ENCODE measurements at regions of chr18 and their contacts with region 1.

Region 1: DNA sequence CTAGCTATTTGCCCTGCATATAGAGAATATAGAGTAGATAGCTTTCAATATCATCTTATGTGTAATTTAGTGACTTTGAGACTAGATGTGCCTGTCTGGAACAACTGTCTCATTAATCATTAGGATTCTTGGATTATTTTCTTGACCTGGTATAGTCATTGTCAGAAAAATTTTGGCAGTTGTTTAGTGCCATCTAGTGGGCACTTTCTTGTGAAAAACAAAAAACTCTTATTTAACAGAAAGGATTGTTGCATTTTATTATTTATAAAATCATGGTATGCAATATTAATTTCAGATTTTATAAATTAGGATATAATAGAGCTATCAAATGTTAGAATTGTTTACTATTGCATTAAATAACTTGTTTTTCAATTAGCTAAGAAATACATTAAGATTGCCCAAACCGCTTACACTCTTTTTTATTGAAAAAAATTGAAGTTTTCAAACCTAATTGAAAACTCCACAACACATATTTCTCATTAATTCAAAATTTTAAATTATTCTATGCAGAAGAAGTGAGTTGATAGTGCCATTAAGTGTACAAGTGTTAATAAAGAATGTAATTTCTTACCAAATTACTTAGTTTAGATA is 80.3 kb downstream of the DYNAP start:
- DNase-seq: no peak
- ATAC-seq: no peak

Region 2: DNA sequence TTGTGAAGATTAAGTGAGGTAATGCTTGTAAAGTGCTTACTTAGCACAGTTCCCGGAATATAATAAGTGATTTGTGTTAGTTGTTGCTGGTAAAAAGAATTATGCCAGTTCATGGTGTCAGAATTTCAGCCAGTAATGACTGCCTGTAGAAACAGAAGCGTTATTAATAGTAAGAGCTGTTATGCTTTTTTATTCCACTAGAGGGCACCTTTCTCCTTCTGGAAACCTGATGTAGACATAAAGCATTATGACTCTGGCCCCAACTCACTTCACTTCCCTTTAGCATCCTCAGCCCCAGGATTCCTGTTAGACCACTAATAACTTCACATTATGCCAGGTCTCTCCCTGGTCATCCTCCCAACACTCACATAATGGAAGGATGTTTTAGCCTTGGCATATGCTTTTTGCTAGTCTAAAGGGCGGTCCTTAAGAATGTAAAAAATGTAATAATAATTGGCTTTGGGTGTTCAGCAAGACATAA is 278.8 kb before region 1 on chr18:
- intact Hi-C with region 1: loop called in 1 of 2 experiments (anchors 5 kb)
- DNase-seq: no peak
- ATAC-seq: peak in 1 of 2 donors; percentile 47

Region 3: DNA sequence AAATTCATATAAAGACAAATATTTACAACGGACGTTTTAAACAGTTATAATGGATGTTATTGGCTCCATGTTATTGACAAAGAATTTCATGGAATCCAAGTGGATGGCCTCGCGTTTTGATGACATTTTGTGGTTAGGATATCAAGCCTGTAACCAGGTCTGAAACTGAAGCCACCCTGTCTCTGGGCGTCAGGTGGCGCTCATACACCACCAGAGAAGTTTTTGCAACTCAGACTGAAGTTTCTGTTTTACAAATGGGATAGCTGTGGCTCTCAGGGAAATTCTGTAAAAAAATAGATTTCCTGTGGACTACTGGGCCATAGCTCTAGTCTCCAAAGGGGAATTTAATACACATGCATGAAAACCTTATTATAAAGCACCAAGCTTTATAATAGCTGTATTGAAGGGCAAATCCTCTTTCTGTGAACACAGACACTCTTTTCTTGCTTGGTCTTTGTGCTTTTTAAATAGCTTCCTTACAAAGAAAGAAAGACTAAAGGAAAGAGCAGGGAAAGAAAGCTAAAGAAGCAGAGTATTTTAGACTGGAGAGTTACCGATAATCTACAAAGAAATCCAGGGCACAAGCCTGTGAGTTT is 227.0 kb before region 1 on chr18:
- intact Hi-C with region 1: loop called in 1 of 2 experiments (anchors 5 kb)
- DNase-seq: peak; percentile 30
- ATAC-seq: peak; percentile 58 to 78

Region 4: GRCh38 chr18:54734059-54734458 is 62.7 kb after region 1 on chr18:
- intact Hi-C with region 1: no loop called
- DNase-seq: no peak
- ATAC-seq: peak in 1 of 2 donors; percentile 97